ENCODE measurements at regions of chr11 and their contacts with region 1.

Region 1: GRCh38 chr11:117205211-117205818 is 6.1 kb downstream of the TAGLN start:
- DNase-seq: no peak
- H3K4me3 ChIP-seq: no peak overlapping the region
- H3K27ac ChIP-seq: no peak overlapping the region
- H3K4me1 ChIP-seq: no peaks in the 10 kb centered on the region
- H3K27me3 ChIP-seq: no peaks in the 10 kb centered on the region
- CTCF ChIP-seq: no peak

Region 2: GRCh38 chr11:117134431-117134830 is 70.9 kb before region 1 on chr11:
- CTCF ChIA-PET with region 1: no interaction called
- POLR2A ChIA-PET with region 1: no interaction called
- intact Hi-C with region 1: loop called (anchors 5 kb)
- DNase-seq: no peak
- H3K4me3 ChIP-seq: no peak overlapping the region
- H3K27ac ChIP-seq: no peak overlapping the region
- H3K4me1 ChIP-seq: no peaks in the 10 kb centered on the region
- H3K27me3 ChIP-seq: no peaks in the 10 kb centered on the region
- CTCF ChIP-seq: no peak

Region 3: DNA sequence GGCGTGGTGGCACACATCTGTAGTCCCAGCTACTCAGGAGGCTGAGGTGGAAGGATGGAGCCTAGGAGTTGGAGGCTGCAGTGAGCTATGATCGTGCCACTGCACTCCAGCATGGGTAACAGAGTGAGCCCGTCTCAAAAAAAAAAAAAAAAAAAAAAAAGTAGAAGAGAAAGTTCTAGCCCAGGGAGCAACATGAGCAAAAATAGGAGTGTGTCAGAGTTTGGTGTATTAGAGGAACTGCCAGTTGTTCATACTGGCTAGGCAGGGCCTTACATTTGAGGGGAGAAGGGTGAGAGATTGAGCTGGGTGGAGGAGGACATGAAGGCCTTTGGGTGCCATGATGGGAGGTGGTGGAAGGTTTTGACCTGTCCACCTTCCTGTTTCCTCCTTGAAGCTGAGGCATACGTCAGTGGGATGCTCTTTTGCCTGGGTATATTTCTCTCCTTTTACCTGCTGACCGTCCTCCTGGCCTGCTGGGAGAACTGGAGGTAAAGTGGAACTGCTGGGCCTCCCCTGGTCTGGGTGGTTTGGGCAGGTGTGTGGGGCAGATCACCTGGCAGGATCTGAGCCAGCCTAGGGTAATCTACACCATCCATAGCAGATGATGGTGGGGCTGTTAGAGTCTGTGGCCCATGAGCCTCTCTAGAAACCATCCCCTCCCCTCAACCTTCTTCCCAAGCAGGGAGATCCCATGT is 19.4 kb before region 1 on chr11:
- CTCF ChIA-PET with region 1: interaction called, 10 read pairs
- POLR2A ChIA-PET with region 1: no interaction called
- intact Hi-C with region 1: no loop called
- DNase-seq: no peak
- H3K4me3 ChIP-seq: no peak overlapping the region
- H3K27ac ChIP-seq: no peak overlapping the region
- H3K4me1 ChIP-seq: peaks cover 7% of the 10 kb centered on the region
- H3K27me3 ChIP-seq: no peaks in the 10 kb centered on the region
- CTCF ChIP-seq: no peak

Measured in A673 (cell line).